ENCODE measurements at regions of chr2 and their contacts with region 1.

Region 1: DNA sequence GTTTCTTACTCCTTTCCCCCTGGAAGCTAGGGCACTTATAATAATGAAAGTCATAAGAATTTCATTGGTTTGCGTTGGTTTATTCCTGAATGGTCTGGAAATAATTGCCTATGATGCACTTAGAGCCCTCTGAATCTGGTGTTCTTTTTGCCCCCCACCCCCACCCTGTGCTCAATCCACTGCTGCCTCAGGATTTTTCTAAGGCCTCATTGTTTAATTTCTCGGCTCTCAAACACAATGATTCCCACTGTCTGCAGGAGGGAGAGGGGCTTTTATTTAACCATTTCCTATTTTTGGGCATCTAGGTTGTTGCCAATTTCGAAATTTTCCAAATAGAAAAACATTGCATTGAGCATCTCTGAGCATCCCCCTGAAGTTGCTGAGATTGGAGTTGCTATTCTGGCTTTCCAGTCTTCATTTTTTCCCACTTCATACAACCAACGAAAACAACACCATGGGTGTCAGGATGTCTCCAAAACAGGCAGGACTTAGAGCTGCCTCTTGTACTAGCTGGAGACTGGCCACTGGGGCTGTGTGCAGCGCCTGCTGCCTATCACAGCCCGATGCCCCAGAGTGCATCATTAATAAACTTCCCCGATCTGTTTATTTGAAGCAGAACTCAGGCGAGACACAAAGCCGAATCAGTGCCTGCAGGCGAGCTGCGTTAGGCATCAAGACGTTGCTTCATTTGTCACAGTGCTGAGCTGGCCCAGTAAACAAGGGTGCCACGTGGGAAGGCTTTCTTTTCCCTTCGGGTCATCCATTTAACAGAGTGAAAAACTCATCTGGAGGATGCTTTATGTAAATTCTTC is 1.8 kb upstream of the PCARE start:
- DNase-seq: peak in 9 of 10 donors; percentile 55 to 91 (median 79)
- H3K4me3 ChIP-seq: peak overlapping the region in 39 of 59 donors; percentile 0 to 54 (median 22)
- H3K27ac ChIP-seq: peak overlapping the region; percentile 68 to 99 (median 91)
- H3K27me3 ChIP-seq: no peaks in the 10 kb centered on the region
- CTCF ChIP-seq: peak in 19 of 56 donors; percentile 7 to 39 (median 24)

Region 2: DNA sequence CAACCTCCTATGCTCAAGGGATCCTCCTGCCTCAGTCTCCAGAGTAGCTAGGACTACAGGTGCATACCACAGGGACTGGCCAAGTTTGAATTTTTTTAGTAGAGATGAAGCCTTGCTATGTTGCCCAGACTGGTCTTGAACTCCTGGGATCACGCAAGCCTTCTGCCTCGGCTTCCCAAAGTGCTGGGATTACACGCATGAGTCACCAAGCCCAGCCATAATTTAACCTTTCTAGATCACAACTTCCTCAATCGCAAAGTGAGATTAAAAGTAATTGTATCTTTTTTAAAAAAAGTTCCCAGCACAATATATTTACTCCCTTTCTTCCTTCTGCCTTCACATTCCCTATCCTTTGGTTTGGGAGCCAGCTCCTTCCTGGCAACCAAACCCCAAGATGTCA is 330.2 kb before region 1 on chr2:
- intact Hi-C with region 1: no loop called
- DNase-seq: no peak
- H3K4me3 ChIP-seq: no peak overlapping the region
- H3K27ac ChIP-seq: peak overlapping the region in 5 of 59 donors; percentile 11 to 39 (median 17)
- H3K27me3 ChIP-seq: no peaks in the 10 kb centered on the region
- CTCF ChIP-seq: no peak

Region 3: DNA sequence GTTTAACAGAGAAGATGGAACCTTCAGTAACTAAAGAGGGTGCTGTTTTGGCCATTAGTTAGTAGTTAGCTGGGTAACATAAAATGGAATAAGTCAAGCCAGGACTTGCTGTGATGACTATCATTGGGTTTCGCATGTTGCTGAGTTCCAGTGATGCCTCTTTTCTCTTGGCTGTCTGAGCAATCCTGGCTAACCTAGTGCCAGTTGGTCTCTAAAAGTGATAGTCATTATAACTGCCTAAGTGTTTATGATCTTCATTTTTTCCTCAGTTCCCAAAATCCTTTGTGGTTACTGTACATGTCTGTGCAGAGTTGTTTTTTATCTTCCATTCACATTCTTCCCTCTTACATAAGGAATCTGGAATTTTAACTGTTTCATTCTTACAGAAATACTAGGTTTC is 148.2 kb before region 1 on chr2:
- intact Hi-C with region 1: no loop called
- DNase-seq: no peak
- H3K4me3 ChIP-seq: no peak overlapping the region
- H3K27ac ChIP-seq: no peak overlapping the region
- H3K27me3 ChIP-seq: no peaks in the 10 kb centered on the region
- CTCF ChIP-seq: no peak

Region 4: DNA sequence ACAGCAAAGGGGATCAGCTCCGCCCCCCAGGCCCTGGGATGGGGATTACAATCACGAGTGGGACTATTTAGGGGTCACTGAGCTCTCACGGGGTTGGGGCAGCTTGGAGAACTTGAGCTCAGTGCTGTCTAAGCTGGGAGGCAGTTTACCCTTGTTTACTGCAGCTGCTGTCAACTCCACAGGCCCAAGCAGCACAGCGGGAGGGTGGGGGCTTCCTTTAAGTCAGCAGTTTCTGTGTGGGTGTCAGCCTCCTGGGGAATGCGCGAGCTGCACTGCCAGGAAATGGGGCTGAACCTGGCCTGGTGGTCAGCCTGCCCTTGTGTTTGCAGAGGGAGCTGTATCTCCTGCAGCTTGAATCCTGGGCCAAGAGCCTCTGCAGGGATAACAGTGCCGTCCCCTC is 65.2 kb before region 1 on chr2:
- intact Hi-C with region 1: no loop called
- DNase-seq: no peak
- H3K4me3 ChIP-seq: no peak overlapping the region
- H3K27ac ChIP-seq: peak overlapping the region in 9 of 59 donors; percentile 18 to 63 (median 33)
- H3K27me3 ChIP-seq: no peaks in the 10 kb centered on the region
- CTCF ChIP-seq: no peak

Region 5: GRCh38 chr2:29115797-29116781 is 40.0 kb after region 1 on chr2:
- intact Hi-C with region 1: loop called (anchors 1 to 5 kb)
- DNase-seq: peak; percentile 44 to 77 (median 67)
- H3K4me3 ChIP-seq: peak overlapping the region; percentile 43 to 89 (median 78)
- H3K27ac ChIP-seq: peak overlapping the region; percentile 62 to 99 (median 96)
- H3K27me3 ChIP-seq: no peaks in the 10 kb centered on the region
- CTCF ChIP-seq: peak in 5 of 56 donors; percentile 6 to 18 (median 7)